ENCODE measurements at regions of chr16 and their contacts with region 1.

Region 1: DNA sequence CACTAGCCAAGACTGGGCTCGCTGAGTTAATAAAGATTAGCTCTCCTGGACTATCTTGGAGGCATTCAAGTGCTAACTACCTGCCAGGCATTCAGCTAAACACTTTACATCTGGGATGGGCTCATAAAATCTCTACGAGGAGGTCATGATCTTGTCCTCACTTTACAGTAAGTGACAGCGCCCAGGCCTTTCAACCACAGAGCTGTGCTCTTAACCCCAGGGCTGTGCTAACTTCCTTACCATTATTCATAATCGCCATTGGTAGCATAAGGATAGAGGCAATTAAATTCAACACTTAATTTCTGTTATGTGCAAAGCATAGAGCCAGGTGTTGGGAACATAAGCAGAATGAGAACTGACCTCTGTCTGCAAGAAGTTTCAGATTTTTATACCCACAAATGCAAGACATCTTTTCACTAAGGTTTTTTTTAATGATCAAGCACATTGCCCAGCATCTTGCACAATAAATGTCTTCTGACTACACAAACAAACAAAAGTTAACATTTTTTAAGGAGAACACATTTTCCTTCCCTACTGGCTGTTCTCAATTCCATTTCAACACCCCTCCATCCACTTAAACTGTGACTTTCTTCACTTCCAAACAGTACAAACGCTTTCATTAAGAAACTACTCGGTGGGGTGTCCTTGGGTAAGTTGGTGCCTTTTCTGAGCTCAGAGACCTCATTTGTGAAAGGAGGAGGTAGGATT is 172.3 kb downstream of the C16orf78 start:
- DNase-seq: no peak
- H3K4me3 ChIP-seq: no peak overlapping the region
- H3K27ac ChIP-seq: no peak overlapping the region; a peak in 1 of 4 replicates
- H3K4me1 ChIP-seq: peaks cover 0 to 67% of the 10 kb centered on the region in 2 experiments; a peak in 2 of 4 replicates
- H3K27me3 ChIP-seq: no peaks in the 10 kb centered on the region
- CTCF ChIP-seq: no peak
- EP300 ChIP-seq: no peak
- RAD21 ChIP-seq: no peak

Region 2: DNA sequence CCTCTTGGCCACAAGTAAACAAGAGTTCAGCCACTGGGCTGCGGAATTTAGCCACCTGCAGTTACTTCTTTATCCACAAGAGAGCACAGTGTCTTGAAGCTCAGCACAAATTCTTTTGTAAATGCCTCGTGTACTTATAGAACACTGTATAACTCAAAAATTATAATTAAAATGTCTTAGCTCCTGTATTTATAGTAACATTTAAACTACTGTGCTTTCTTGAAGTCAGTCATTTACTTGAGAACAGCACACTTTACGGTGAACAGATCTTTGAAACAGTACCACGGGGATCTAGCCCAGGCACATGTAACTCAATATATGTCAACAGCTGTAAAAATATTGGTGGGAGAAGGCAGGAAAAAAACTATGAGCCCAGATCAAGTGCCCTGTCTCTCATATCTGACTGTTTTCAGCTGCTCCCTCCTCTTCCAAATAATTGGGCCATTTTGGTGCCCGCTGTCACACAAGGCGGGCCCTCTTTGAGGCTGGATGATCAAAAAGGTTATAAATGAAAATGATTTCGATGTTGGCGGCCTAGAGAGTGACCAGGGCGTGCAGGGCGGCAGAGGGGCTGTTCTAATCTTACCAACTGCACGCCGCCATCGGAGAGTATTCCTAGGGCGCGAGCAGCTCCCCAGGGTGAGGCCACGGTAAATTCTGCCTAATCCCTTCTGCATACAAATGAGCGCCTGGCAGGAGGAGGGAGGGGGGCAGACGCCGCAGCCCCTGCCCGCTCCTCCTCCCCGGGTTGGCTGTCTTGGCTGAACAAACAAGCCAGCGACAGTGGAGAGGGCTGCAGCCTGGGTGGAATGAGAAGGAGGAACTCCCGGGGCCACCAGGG is 10.9 kb after region 1 on chr16:
- CTCF ChIA-PET with region 1: interaction called, 11 read pairs
- POLR2A ChIA-PET with region 1: no interaction called
- DNase-seq: no peak
- H3K4me3 ChIP-seq: no peak overlapping the region; a peak in 1 of 4 replicates
- H3K27ac ChIP-seq: peak overlapping the region in 1 of 2 experiments; percentile 11; a peak in 1 of 4 replicates
- H3K4me1 ChIP-seq: peaks cover 0 to 34% of the 10 kb centered on the region in 2 experiments; a peak in 3 of 4 replicates
- H3K27me3 ChIP-seq: peaks cover 4% of the 10 kb centered on the region; the same call in 1 of the 2 replicates
- CTCF ChIP-seq: peak; percentile 62
- EP300 ChIP-seq: no peak
- RAD21 ChIP-seq: peak; percentile 55